ENCODE measurements at regions of chr2 and their contacts with region 1.

Region 1: DNA sequence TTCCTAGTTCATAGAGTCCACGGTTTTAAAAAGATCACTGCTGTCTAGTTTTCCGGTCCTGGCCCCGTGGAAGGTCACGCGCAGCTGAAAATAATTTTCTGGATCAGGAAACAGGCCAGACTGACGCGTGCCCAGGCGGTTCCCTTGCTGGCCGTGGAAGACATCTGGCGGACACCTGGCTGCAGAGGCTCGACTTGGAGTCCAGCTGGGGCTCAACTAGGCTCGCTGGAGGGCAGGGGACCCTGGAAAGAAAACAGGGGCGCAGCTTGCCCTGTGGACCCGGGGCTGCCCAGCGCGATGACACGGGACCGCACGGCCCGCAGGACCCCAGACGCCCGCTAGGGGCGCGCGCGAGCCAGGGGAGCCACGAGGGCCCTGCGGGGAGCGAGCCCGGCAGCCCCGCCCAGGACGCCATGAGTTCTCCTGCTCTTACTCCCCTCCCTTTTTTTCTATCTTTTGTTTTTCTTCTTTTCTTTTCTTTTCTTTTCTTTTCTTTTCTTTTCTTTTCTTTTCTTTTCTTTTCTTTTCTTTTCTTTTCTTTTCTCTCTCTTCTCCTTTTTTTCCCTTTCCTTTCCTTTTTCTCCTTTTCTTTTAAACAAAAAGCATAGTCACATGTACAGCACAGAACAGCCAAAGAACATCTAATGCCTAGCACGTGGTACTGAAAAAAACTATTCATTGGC is 43.2 kb upstream of the UBE2F start:
- DNase-seq: peak; percentile 71
- H3K4me3 Mint-ChIP-seq: no peak overlapping the region
- H3K27ac Mint-ChIP-seq: peak overlapping the region; percentile 76
- H3K4me1 Mint-ChIP-seq: peaks cover 37% of the 10 kb centered on the region
- H3K27me3 Mint-ChIP-seq: no peaks in the 10 kb centered on the region

Region 2: GRCh38 chr2:237912271-237913192 is 11.1 kb before region 1 on chr2:
- CTCF ChIA-PET with region 1: interaction called, 10 read pairs
- POLR2A ChIA-PET with region 1: no interaction called
- DNase-seq: no peak
- H3K4me3 Mint-ChIP-seq: no peak overlapping the region
- H3K27ac Mint-ChIP-seq: no peak overlapping the region
- H3K4me1 Mint-ChIP-seq: peaks cover under 1% of the 10 kb centered on the region
- H3K27me3 Mint-ChIP-seq: no peaks in the 10 kb centered on the region

Region 3: GRCh38 chr2:238120463-238121298 is 197.1 kb after region 1 on chr2:
- CTCF ChIA-PET with region 1: no interaction called
- POLR2A ChIA-PET with region 1: no interaction called
- DNase-seq: no peak
- H3K4me3 Mint-ChIP-seq: no peak overlapping the region
- H3K27ac Mint-ChIP-seq: no peak overlapping the region
- H3K4me1 Mint-ChIP-seq: no peaks in the 10 kb centered on the region
- H3K27me3 Mint-ChIP-seq: no peaks in the 10 kb centered on the region

Region 4: DNA sequence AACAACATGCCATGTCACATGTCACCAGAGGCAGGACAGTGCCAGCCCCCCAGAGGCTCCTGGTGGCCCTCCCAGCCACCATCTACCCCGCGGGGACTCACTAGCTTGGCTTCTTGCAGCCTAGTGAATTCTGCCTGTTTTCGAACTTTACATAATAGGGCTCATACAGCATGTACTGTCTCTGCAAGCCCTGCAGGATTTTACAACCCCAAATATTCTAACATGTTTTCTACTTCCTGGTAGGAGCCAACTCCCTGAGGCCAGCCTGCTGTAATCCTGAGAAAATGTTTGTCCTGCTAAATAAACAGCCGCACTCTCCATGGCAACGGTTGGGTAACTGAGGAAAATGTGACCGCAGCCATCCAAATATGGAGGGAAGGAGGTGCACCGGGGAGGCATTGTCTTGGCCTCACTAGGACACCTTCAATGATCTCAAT is 362.0 kb after region 1 on chr2:
- CTCF ChIA-PET with region 1: no interaction called
- POLR2A ChIA-PET with region 1: no interaction called
- DNase-seq: no peak
- H3K4me3 Mint-ChIP-seq: no peak overlapping the region
- H3K27ac Mint-ChIP-seq: no peak overlapping the region
- H3K4me1 Mint-ChIP-seq: peaks cover 29% of the 10 kb centered on the region
- H3K27me3 Mint-ChIP-seq: no peaks in the 10 kb centered on the region